CD8-positive, alpha-beta T cell (primary cell): ENCODE measurements at regions of chr3 and their contacts with region 1.

Region 1: DNA sequence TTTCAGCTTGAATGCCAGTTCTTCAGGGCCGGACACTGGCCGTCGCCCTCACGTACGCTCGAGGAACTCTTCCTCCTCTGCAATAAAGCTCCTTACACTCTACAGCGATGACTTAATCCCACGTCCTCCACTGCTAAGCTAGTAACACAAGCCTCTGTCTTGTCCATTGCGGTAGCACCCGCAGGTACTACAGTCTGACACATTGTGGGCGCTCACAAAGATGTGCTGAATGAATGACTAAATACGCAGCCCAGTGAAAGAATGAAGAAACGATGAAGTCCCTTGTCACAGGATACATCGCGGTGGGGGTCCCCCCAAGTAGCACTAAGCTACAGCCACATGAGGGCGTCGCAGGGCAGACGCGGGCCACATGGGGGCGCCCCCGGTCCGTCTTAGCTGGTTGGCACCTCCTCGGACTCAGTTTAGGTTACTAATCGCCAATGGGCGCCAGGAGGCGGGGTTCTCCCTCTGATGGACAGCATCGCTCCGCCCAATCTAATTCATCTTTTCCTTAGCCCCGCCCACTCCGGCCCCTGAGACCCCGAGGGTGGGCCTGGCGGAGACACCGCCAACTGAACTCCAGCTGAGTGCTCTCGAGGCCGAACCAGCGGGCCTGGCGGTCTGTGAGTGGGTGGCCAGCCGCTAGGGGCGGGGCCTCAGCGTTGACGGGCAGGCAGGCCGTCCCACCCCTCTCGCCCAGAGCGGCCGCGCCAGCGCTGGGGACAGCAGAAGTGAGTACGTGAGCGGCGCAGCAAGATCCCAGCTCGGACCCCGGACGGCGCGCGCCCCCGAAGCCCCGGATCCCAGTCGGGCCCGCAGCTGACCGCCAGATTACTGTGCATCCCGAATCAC is at the start of gene EPHB3:
- DNase-seq: peak; percentile 80 to 93 (median 91)
- ATAC-seq: peak; percentile 86
- H3K4me3 ChIP-seq: peak within 1 kb of the TSS; percentile 42 to 43
- H3K4me3 Mint-ChIP-seq: peak within 1 kb of the TSS; percentile 70
- H3K27ac ChIP-seq: no peak within 1 kb of the TSS
- H3K27ac Mint-ChIP-seq: peak within 1 kb of the TSS; percentile 8
- H3K4me1 ChIP-seq: peaks cover 47% of the 10 kb centered on the region
- H3K4me1 Mint-ChIP-seq: peaks cover 43% of the 10 kb centered on the region
- H3K27me3 ChIP-seq: peaks cover 6 to 22% of the 10 kb centered on the region in 2 experiments
- H3K27me3 Mint-ChIP-seq: peaks cover 38% of the 10 kb centered on the region
- CTCF ChIP-seq: peak; percentile 94
- total RNA-seq, gene EPHB3: not detected

Region 2: DNA sequence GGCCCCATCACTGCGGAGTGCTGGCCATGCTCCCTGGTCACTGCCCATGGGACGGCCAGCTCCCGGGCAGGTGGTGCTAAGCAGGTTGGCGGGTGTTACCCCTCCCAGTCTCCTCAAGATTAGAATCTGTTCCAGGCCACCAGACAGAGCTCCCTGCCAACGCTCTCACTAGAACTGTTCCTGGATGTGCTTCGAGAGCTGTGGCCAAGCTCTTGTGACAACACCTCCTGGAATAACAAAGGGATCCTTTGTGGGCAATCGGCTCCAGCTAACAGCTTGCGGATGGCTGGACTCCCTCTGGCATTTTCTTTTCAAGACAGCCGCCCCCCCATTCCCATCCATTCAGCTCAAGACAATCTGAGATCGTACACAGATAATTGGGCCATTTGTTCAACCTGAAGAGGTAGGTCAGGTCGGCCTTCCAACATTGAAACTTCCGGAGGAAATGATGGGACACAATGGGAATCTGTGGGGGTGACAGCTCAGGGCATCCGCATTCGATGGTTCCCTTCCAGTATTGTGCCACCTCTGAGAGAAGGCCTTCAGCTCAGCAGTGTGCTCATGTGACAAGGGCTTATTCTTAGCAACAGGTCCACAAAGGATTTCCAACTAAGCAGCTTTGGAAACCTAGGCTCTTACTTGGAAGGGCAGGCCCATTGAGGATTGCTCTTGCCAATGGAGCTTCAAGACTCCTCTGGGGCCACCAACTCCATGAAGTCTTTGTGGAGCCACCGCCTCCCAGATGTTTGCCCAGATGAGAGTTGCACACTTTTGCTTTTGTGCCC is 11.3 kb before region 1 on chr3:
- CTCF ChIA-PET with region 1: interaction called, 31 read pairs
- POLR2A ChIA-PET with region 1: interaction called, 3 read pairs
- intact Hi-C with region 1: no loop called
- DNase-seq: no peak
- ATAC-seq: no peak
- H3K4me3 ChIP-seq: no peak overlapping the region
- H3K4me3 Mint-ChIP-seq: no peak overlapping the region
- H3K27ac ChIP-seq: no peak overlapping the region
- H3K27ac Mint-ChIP-seq: no peak overlapping the region
- H3K4me1 ChIP-seq: peaks cover 17% of the 10 kb centered on the region
- H3K4me1 Mint-ChIP-seq: peaks cover 11% of the 10 kb centered on the region
- H3K27me3 ChIP-seq: peaks cover 0 to 2% of the 10 kb centered on the region in 2 experiments
- H3K27me3 Mint-ChIP-seq: peaks cover 19% of the 10 kb centered on the region
- CTCF ChIP-seq: no peak

Region 3: GRCh38 chr3:184601576-184602415 is 40.5 kb after region 1 on chr3:
- CTCF ChIA-PET with region 1: no interaction called
- POLR2A ChIA-PET with region 1: no interaction called
- intact Hi-C with region 1: loop called in 1 of 2 experiments (anchors 1 kb)
- DNase-seq: no peak
- ATAC-seq: no peak
- H3K4me3 ChIP-seq: no peak overlapping the region
- H3K4me3 Mint-ChIP-seq: peak overlapping the region; percentile 51
- H3K27ac ChIP-seq: no peak overlapping the region
- H3K27ac Mint-ChIP-seq: no peak overlapping the region
- H3K4me1 ChIP-seq: peaks cover 27% of the 10 kb centered on the region
- H3K4me1 Mint-ChIP-seq: peaks cover 33% of the 10 kb centered on the region
- H3K27me3 ChIP-seq: peaks cover 28 to 41% of the 10 kb centered on the region in 2 experiments
- H3K27me3 Mint-ChIP-seq: peaks cover 50% of the 10 kb centered on the region
- CTCF ChIP-seq: no peak

Region 4: GRCh38 chr3:184727357-184728009 is 166.2 kb after region 1 on chr3:
- CTCF ChIA-PET with region 1: interaction called, 4 read pairs
- POLR2A ChIA-PET with region 1: no interaction called
- intact Hi-C with region 1: loop called (anchors 1 kb)
- DNase-seq: peak in 7 of 9 experiments; percentile 11 to 76 (median 52)
- ATAC-seq: peak; percentile 57
- H3K4me3 ChIP-seq: no peak overlapping the region
- H3K4me3 Mint-ChIP-seq: no peak overlapping the region
- H3K27ac ChIP-seq: no peak overlapping the region
- H3K27ac Mint-ChIP-seq: no peak overlapping the region
- H3K4me1 ChIP-seq: no peaks in the 10 kb centered on the region
- H3K4me1 Mint-ChIP-seq: no peaks in the 10 kb centered on the region
- H3K27me3 ChIP-seq: no peaks in the 10 kb centered on the region
- H3K27me3 Mint-ChIP-seq: peaks cover 14% of the 10 kb centered on the region
- CTCF ChIP-seq: peak; percentile 41

Region 5: DNA sequence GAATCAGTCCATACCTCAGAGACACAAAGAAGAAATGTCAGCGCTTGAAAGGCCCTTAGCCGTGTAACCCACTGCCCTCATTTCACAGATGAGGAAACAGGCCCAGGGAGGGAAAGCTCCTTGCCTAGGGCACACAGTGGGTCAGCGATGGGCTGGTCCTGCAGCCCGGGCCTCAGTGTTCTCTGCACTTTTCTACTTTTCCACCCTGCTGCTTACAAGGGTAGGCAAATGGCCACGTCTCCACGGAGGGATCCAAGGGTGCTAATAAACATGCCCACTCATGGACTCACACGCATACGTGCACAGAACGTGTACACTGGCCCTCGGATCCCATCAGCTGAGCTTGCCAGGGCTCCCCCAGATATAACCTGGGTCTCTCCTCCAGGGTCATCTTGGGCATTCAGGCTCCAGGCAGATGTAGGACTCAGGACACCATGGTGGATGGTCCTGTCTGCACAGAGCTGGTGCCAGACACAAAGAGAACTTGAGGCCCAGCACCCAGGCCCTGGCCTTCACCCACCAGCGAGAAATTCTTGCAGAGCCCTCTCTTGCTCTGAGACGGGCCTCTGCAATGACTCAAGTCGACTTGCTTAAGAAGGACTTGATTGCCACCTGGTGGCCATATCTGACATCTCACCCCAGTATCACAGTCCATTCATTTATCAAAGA is 216.2 kb after region 1 on chr3:
- CTCF ChIA-PET with region 1: interaction called, 12 read pairs
- POLR2A ChIA-PET with region 1: interaction called, 6 read pairs
- intact Hi-C with region 1: loop called in 1 of 2 experiments (anchors 1 kb)
- DNase-seq: peak; percentile 63 to 91 (median 84)
- ATAC-seq: peak; percentile 98
- H3K4me3 ChIP-seq: no peak overlapping the region
- H3K4me3 Mint-ChIP-seq: no peak overlapping the region
- H3K27ac ChIP-seq: no peak overlapping the region
- H3K27ac Mint-ChIP-seq: no peak overlapping the region
- H3K4me1 ChIP-seq: no peaks in the 10 kb centered on the region
- H3K4me1 Mint-ChIP-seq: no peaks in the 10 kb centered on the region
- H3K27me3 ChIP-seq: peaks cover 0 to 2% of the 10 kb centered on the region in 2 experiments
- H3K27me3 Mint-ChIP-seq: peaks cover 22% of the 10 kb centered on the region
- CTCF ChIP-seq: peak; percentile 94

Region 6: DNA sequence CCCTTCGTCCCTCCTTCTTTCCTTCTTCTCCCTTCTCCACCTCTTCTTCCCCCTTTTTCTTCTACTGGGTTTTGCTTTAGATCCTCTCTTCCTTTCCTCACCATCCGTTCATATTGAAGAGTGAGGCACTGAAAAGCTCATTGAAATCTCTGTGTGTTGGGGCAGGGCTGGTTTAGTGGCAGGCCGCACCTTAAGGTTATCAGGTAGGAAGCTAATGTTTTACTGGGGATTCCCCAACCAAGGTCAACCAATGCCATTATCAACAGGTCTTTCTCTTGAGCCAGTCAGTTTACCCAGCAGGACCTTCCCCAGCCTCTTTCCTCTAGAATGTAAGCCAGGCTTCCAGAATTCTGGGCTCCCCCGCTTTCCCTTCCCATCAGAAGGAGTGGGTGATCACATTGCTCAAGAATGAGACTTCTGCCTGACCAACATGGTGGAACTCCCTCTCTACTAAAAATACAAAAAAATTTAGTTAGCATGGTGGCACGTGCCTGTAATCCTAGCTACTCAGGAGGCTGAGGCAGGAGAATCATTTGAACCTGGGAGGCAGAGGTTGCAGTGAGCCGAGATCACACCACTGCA is 239.2 kb after region 1 on chr3:
- CTCF ChIA-PET with region 1: interaction called, 13 read pairs
- POLR2A ChIA-PET with region 1: no interaction called
- intact Hi-C with region 1: no loop called
- DNase-seq: no peak
- ATAC-seq: no peak
- H3K4me3 ChIP-seq: no peak overlapping the region
- H3K4me3 Mint-ChIP-seq: no peak overlapping the region
- H3K27ac ChIP-seq: no peak overlapping the region
- H3K27ac Mint-ChIP-seq: no peak overlapping the region
- H3K4me1 ChIP-seq: no peaks in the 10 kb centered on the region
- H3K4me1 Mint-ChIP-seq: peaks cover 4% of the 10 kb centered on the region
- H3K27me3 ChIP-seq: peaks cover 3% of the 10 kb centered on the region in 2 experiments
- H3K27me3 Mint-ChIP-seq: peaks cover 24% of the 10 kb centered on the region
- CTCF ChIP-seq: no peak